Left ventricle myocardium inferior (tissue), 1 donor: ENCODE measurements at regions of chr3 and their contacts with region 1.

Region 1: DNA sequence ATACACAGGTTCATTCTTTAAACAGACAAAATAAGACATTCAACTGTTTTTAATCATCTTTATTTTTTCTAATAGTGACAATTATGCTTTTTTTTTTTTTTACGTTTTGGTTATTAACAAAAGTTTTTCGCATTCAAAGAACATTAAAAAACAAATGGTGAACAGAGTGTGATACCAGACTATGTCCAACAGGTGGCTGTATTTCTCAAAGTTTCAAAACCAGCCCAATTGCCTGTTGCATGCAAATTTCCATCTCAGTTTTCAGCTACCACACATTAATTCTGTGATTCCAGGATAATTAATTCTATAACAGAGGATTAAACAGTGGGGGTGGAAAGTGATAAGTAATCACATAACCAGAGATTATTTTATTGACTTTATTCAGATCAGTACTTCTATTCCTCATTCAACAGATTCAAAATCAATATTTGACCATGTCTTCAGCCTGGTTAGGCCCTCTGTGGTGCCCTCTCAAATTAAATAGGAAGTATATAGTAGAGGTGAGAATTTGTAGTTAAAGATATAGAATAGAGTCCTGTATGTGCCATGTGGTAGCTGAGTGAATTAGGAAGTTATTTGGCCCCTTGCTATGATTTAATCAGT is 122.2 kb upstream of the DCBLD2 start:
- DNase-seq: no peak
- H3K4me3 ChIP-seq: no peak overlapping the region
- H3K27ac ChIP-seq: no peak overlapping the region
- H3K4me1 ChIP-seq: no peaks in the 10 kb centered on the region
- H3K27me3 ChIP-seq: no peaks in the 10 kb centered on the region
- CTCF ChIP-seq: peak; percentile 77

Region 2: GRCh38 chr3:99172736-99173657 is 149.3 kb after region 1 on chr3:
- intact Hi-C with region 1: loop called (anchors 10 kb)
- DNase-seq: no peak
- H3K4me3 ChIP-seq: no peak overlapping the region
- H3K27ac ChIP-seq: no peak overlapping the region
- H3K4me1 ChIP-seq: no peaks in the 10 kb centered on the region
- H3K27me3 ChIP-seq: no peaks in the 10 kb centered on the region
- CTCF ChIP-seq: peak; percentile 62

Region 3: GRCh38 chr3:99191186-99191585 is 167.5 kb after region 1 on chr3:
- intact Hi-C with region 1: no loop called
- DNase-seq: no peak
- H3K4me3 ChIP-seq: no peak overlapping the region
- H3K27ac ChIP-seq: no peak overlapping the region
- H3K4me1 ChIP-seq: no peaks in the 10 kb centered on the region
- H3K27me3 ChIP-seq: no peaks in the 10 kb centered on the region
- CTCF ChIP-seq: no peak

Region 4: DNA sequence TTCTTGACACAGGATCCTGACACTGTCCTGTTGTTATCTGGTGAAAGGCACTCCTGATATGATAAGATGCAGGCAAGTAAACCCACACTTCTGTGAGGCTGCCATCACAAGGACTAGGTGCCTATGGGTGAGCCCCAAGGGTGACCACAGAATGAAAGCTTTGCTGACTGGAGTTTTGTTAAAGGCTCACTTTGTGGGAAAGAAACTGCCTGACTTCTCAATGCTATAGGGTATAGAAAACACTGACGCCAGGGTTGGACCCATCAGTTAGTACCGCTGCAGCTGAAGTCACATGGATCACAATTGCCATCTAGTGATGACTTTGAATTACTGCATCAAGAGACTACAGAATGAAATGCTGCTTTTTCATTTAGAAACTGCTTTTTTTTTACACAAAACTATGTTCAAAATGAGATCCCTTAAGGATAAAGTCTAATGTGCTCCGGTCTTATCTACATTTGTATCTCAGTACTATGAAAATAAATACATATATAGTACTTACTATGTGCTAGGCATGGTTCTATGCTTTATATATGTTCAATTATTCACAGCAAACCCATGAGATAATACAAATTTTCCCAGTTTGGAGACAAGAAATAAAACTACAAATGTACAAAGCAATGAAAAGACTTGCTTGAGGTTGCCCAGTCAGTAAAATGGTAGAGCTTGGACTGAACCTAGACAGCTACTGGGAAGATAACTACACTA is 729.7 kb after region 1 on chr3:
- intact Hi-C with region 1: loop called (anchors 10 kb)
- DNase-seq: no peak
- H3K4me3 ChIP-seq: no peak overlapping the region
- H3K27ac ChIP-seq: no peak overlapping the region
- H3K4me1 ChIP-seq: peaks cover 14% of the 10 kb centered on the region
- H3K27me3 ChIP-seq: no peaks in the 10 kb centered on the region
- CTCF ChIP-seq: peak; percentile 85